Activated B cell treated with CpG ODN at 0.5 μM for 24 hours (primary cell): ENCODE measurements at regions of chr1 and their contacts with region 1.

Region 1: DNA sequence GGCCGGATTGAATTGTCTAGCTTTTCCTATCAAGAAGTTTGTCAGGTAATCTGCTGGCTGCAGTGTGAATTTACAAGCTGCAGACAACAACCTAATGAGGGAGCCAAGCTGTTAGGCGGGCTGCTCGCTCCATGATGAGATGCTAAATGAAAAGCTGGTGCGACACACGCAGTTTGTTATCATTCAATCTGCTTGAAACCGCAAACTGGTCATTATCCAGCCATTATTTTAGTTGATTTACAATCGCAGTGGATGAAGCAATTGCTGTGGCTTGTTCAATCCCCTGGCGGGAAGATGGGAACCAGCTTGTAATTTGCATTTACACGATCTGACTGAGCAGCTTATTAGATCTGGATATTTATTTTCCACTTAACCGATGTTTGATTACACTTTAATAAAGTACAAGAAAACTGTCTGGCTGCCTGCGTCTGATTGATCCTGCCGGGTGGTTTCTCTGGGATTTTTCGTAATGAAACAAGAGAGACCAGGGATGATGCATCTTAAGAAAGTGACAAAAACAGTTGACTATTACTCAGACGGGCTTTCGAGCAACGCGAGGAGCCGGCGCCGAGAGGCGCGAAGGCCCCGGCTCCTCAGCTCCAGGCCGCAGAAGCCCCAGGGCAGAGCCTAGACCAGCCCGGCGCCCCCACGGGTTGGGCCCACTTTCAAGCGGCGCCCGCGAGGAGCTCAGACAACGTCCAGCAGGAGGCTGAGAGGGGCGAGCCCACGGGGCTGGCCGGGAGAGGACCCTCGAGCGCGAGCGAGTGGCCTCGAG is 118.0 kb upstream of the BARHL2 start:
- DNase-seq: no peak
- ATAC-seq: no peak
- H3K4me3 Mint-ChIP-seq: peak overlapping the region; percentile 3
- H3K27ac Mint-ChIP-seq: no peak overlapping the region
- H3K4me1 Mint-ChIP-seq: peaks cover 23% of the 10 kb centered on the region
- H3K27me3 Mint-ChIP-seq: peaks cover 75% of the 10 kb centered on the region
- CTCF ChIP-seq: no peak

Region 2: GRCh38 chr1:90616395-90616794 is 218.7 kb before region 1 on chr1:
- CTCF ChIA-PET with region 1: no interaction called
- POLR2A ChIA-PET with region 1: no interaction called
- intact Hi-C with region 1: no loop called
- DNase-seq: no peak
- ATAC-seq: no peak
- H3K4me3 Mint-ChIP-seq: no peak overlapping the region
- H3K27ac Mint-ChIP-seq: no peak overlapping the region
- H3K4me1 Mint-ChIP-seq: no peaks in the 10 kb centered on the region
- H3K27me3 Mint-ChIP-seq: no peaks in the 10 kb centered on the region
- CTCF ChIP-seq: no peak

Region 3: DNA sequence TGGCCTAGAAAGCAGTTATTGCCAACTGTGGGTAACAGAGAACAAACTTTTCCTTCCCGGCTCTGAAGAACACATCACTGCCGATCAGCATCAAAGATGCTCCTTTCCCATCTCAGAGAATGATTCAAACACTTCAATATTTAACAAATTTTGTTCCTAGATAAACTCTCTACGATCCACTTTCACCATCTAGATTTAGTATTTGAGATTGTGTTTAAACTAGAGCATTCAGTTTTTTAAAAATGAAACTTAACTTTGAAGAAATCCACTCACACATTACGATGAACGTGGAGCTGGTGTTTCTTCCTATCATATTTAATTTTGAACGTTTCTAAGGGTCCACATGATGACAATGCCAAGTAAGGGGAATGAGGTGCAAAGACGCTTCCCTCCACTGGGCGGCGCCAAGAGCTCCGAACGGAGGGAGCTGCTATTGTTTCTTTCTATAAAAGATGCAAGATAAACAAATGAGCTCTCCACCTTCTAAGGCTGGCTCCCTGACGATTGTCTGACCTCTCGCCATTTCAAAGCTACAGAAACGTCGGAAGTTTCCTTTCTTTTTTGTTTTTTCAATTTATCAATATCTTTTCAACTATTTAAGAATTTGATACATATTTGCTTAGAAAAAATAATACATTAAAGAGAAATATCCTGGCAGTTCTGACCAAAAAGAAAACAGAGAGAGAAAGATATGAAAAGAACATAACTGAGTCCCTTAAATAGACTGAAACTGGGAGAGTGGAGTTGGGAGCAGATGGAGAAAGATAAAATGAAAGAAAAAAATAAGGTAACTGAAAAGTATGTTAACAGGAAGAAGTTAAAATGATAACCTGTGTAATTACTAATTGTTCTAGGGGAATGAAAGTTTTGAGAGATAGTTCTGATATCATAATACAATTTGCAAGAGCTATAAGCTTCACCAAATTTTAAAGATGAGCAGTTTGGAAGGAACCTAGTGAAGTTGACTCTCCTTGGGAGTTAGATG is 113.6 kb before region 1 on chr1:
- CTCF ChIA-PET with region 1: no interaction called
- POLR2A ChIA-PET with region 1: no interaction called
- intact Hi-C with region 1: loop called (anchors 2 kb)
- DNase-seq: no peak
- ATAC-seq: peak; percentile 40
- H3K4me3 Mint-ChIP-seq: no peak overlapping the region
- H3K27ac Mint-ChIP-seq: no peak overlapping the region
- H3K4me1 Mint-ChIP-seq: peaks cover 36% of the 10 kb centered on the region
- H3K27me3 Mint-ChIP-seq: peaks cover 79% of the 10 kb centered on the region
- CTCF ChIP-seq: no peak

Region 4: DNA sequence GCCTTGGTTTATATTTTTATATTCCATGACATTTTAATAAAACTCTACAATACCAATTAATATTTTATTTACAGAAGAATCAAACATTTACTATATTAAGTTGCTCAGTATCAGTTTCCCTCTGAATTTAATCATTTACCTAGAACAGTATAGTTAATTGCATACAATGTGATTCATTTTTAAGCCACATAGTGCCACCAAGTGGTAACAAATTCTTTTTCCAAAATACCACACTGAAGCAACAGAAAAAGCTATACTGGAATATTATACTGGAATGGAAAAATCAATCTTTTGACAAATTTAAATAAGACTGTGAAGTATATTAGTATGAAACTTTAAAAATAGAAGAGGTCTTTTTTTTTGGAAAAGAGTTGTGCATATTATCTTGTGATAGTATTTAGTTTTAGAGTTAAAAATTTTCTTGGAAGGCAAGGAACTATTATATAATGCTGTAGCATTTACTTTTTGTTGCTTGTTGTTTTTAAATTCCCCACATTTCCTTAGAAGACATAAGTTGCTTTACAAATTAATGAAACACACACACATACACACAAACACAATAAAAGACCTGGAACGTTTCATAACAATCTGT is 129.5 kb after region 1 on chr1:
- CTCF ChIA-PET with region 1: no interaction called
- POLR2A ChIA-PET with region 1: no interaction called
- intact Hi-C with region 1: no loop called
- DNase-seq: no peak
- ATAC-seq: no peak
- H3K4me3 Mint-ChIP-seq: no peak overlapping the region
- H3K27ac Mint-ChIP-seq: peak overlapping the region; percentile 11
- H3K4me1 Mint-ChIP-seq: peaks cover 35% of the 10 kb centered on the region
- H3K27me3 Mint-ChIP-seq: no peaks in the 10 kb centered on the region
- CTCF ChIP-seq: no peak